PC-3 (cell line): ENCODE measurements at regions of chr12 and their contacts with region 1.

Region 1: GRCh38 chr12:54853995-54854566 is at the start of gene MUCL1:
- DNase-seq: peak; percentile 93
- ATAC-seq: peak; percentile 99
- H3K4me3 ChIP-seq: no peak within 1 kb of the TSS
- H3K27ac ChIP-seq: no peak within 1 kb of the TSS
- H3K4me1 ChIP-seq: no peaks in the 10 kb centered on the region
- H3K27me3 ChIP-seq: 0 out of 2 replicates have a peak, but pooled peaks cover under 1% of the 10 kb centered on the region
- CTCF ChIP-seq: peak; percentile 97
- total RNA-seq, gene MUCL1: not detected in 2 replicates

Region 2: DNA sequence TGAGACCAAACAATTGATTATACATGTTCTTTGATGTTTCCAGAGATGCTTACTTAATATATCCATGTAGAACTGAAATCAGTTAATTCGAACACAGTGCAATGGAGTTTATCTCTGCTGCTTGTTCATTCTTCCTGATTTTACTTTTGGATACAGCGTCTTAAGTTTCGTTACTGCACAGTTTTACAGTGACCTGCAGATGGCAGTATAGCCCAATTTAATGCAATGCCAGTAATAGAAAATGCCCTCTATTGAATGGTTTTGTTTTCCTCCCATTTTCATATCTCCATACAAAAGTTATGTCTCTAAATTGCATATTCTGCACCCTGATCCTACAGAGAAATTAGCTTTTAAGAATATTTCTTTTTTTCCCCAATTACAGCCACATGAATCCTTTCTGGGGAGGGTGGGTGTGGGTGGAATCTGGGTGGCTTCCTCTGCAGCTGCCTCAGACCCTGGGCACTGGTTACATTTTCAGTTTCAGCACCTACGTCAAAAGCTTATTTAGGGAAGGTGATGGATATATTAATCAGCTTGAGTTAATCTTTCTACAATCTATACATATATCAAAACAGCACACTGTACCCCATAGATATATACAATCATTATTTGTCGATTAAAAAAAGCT is 104.8 kb before region 1 on chr12:
- CTCF ChIA-PET with region 1: no interaction called
- POLR2A ChIA-PET with region 1: no interaction called
- intact Hi-C with region 1: loop called (anchors 1 kb)
- DNase-seq: peak; percentile 65
- ATAC-seq: peak; percentile 73
- H3K4me3 ChIP-seq: no peak overlapping the region
- H3K27ac ChIP-seq: no peak overlapping the region
- H3K4me1 ChIP-seq: no peaks in the 10 kb centered on the region
- H3K27me3 ChIP-seq: peaks cover 12% of the 10 kb centered on the region; the same call in 1 of the 2 replicates
- CTCF ChIP-seq: peak; percentile 88

Region 3: GRCh38 chr12:54759751-54760150 is 94.3 kb before region 1 on chr12:
- CTCF ChIA-PET with region 1: interaction called, 3 read pairs
- POLR2A ChIA-PET with region 1: no interaction called
- intact Hi-C with region 1: loop called (anchors 2 kb)
- DNase-seq: peak; percentile 73
- ATAC-seq: peak; percentile 92
- H3K4me3 ChIP-seq: no peak overlapping the region
- H3K27ac ChIP-seq: no peak overlapping the region
- H3K4me1 ChIP-seq: no peaks in the 10 kb centered on the region
- H3K27me3 ChIP-seq: peaks cover 28% of the 10 kb centered on the region
- CTCF ChIP-seq: peak; percentile 80